ENCODE measurements at regions of chr16 and their contacts with region 1.

Region 1: GRCh38 chr16:16120382-16121184 is 102.7 kb downstream of the ABCC6 start:
- DNase-seq: no peak

Region 2: GRCh38 chr16:15865742-15866141 is 254.8 kb before region 1 on chr16:
- in situ Hi-C with region 1: loop called (anchors 5 kb)
- DNase-seq: no peak

Region 3: GRCh38 chr16:15949210-15950160 is 171.1 kb before region 1 on chr16 and contains the start of gene ABCC1:
- in situ Hi-C with region 1: no loop called
- DNase-seq: peak; percentile 49
- total RNA-seq, gene ABCC1: 42.8 and 51.5 TPM in 2 replicates